ENCODE measurements at regions of chr17 and their contacts with region 1.

Region 1: GRCh38 chr17:56779898-56780733 is 53.6 kb downstream of the C17orf67 start:
- DNase-seq: peak; percentile 93
- ATAC-seq: peak; percentile 95
- H3K4me3 Mint-ChIP-seq: peak overlapping the region; percentile 77
- H3K27ac Mint-ChIP-seq: peak overlapping the region; percentile 91
- H3K4me1 Mint-ChIP-seq: peaks cover 24% of the 10 kb centered on the region
- H3K27me3 Mint-ChIP-seq: peaks cover 1% of the 10 kb centered on the region

Region 2: DNA sequence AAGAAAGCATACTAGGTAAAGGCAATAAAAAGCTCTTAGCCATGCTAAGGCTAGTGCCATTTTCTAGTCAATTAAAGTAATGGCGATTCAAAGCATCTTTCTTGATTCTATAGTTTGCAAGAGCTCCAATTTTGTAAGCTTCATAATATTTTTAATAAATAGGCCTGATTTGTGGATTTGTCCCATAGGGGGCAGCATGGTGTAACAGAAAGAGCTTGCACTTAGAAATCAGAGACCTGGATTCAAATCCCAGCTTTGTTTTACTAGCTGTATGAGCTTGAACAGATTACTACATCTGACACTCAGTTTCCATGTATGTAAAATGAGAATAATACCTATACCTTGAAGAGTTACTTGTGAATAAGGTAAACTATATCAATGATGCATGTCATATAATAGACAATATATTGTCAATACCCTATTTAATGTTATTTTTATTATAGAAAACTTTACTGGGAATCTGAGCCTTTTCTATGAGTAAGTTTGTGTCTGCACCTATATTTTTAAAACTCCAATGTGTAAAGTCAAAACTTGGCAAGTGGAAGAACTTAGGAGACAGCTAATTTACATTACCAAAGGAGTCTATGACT is 280.2 kb before region 1 on chr17:
- CTCF ChIA-PET with region 1: interaction called, 8 read pairs
- POLR2A ChIA-PET with region 1: no interaction called
- intact Hi-C with region 1: loop called (anchors 2 to 10 kb)
- DNase-seq: peak; percentile 45
- ATAC-seq: no peak
- H3K4me3 Mint-ChIP-seq: no peak overlapping the region
- H3K27ac Mint-ChIP-seq: no peak overlapping the region
- H3K4me1 Mint-ChIP-seq: no peaks in the 10 kb centered on the region
- H3K27me3 Mint-ChIP-seq: no peaks in the 10 kb centered on the region

Region 3: DNA sequence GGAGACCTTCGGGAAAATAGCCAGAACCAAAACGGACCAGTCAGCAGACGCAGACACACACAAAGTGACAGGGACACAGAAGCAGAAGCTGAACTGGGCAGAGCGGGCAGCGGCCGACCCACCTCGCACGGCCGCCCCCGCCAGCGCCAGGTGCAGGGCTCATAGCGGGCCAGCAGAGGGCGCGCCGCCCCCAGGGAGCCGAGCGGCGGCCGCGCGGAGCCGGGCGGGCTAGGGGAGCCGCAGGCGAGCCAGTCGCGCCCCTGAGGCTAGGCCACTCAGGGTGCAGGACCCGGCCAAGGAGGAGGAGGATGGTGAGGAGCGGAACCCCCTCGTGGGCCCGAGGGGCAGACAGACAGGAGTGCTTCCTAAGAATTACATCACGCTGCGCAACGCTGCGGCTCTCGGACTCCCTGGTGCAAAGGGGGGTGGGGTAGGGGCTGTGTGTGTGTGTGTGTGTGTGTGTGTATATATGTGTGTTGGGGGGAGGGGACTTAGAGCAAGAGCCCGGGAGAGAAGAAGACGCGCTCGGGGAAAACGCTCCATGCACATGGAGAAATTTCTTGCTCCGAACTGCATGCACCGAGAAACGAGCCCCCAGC is 187.5 kb before region 1 on chr17:
- CTCF ChIA-PET with region 1: interaction called, 20 read pairs
- POLR2A ChIA-PET with region 1: interaction called, 3 read pairs
- intact Hi-C with region 1: loop called (anchors 1 kb)
- DNase-seq: peak; percentile 82
- ATAC-seq: peak; percentile 60
- H3K4me3 Mint-ChIP-seq: peak overlapping the region; percentile 64
- H3K27ac Mint-ChIP-seq: no peak overlapping the region
- H3K4me1 Mint-ChIP-seq: peaks cover 20% of the 10 kb centered on the region
- H3K27me3 Mint-ChIP-seq: peaks cover 23% of the 10 kb centered on the region

Region 4: DNA sequence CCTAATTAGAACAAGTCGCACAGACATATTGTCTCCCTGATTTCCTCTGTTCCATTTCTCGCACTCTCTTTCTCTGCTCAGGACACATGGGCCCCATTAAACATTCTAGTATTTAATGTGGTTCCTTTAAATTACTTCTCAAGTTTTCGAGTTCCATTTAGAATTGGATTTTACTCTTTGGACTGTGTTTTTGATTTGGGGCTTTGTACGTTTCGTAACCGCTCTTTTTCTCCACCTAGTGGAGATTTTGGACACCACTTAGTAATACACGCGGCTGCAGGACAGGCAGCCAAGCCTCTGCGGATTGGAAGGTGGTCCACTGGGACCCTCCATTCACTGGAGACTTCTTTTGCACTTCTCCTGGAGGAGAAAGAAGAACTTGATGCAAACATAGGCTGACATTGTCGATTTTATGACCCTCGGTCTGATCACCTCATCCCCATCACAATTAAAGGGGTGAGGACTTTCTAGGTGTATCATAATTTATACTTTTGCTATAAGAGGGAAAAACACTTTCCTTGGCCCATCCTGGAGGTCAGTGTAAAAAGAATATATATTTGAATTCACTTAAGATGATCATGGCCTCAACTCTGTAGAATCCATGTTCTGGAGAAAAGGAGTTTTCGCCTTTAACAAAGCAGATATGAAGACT is 100.9 kb before region 1 on chr17:
- CTCF ChIA-PET with region 1: interaction called, 10 read pairs
- POLR2A ChIA-PET with region 1: no interaction called
- intact Hi-C with region 1: loop called (anchors 1 kb)
- DNase-seq: peak; percentile 19
- ATAC-seq: peak; percentile 34
- H3K4me3 Mint-ChIP-seq: peak overlapping the region; percentile 63
- H3K27ac Mint-ChIP-seq: no peak overlapping the region
- H3K4me1 Mint-ChIP-seq: peaks cover 24% of the 10 kb centered on the region
- H3K27me3 Mint-ChIP-seq: peaks cover 42% of the 10 kb centered on the region

Region 5: DNA sequence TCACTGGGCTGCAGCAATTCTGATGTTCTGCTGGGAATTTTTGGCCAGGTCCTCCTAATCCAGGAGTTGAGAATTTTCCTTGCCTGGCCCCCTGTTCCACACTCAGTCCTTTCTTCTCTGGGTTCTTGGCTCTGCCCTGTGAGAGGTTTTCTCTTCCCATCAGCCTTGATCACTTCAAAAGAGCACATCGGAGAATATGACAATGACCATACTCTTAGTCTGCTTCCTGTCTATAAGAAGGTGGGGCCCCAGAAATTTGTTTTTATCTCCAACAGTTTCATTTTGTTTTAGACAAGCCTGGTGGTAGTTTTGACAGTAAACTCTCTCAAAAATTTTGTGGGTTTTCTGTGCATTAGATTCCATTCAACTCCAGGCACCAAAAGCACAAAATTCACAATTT is 17.1 kb before region 1 on chr17:
- CTCF ChIA-PET with region 1: interaction called, 10 read pairs
- POLR2A ChIA-PET with region 1: no interaction called
- intact Hi-C with region 1: no loop called
- DNase-seq: no peak
- ATAC-seq: peak; percentile 97
- H3K4me3 Mint-ChIP-seq: peak overlapping the region; percentile 20
- H3K27ac Mint-ChIP-seq: peak overlapping the region; percentile 82
- H3K4me1 Mint-ChIP-seq: peaks cover 22% of the 10 kb centered on the region
- H3K27me3 Mint-ChIP-seq: no peaks in the 10 kb centered on the region

Region 6: DNA sequence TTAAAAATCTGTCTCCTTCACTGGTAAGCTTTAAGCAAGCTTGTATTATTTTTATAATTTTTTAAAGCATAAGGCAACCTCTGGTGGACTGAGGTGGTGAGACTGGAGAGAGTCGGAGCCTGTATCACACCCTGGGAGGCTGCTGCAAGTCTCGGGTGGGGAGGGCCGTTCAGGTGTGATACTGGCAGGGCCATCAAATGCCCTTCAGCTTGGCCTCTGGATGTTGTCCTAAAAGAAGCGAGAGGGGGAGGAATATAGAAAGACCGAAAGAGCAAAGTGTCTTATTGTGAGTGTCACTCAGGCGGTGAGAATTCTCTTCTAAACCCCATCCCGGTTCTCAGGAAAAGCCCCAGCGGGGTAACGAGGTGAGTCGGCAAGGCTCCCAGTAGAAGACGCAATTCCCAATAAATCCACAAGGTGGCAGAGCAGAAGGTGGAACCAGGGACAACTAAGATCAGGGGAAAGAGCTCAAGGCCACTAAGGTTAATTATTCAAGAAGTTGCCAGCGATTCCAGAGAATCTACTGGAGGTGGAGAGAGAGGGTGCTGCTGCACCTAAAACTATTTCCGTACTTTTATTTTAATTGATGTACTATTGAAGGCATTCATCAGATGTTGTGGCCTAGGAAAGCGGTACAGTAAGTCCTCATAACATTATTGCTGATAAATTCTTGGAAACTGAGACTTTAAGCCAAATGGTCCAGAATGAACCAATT is 39.5 kb after region 1 on chr17:
- CTCF ChIA-PET with region 1: interaction called, 16 read pairs
- POLR2A ChIA-PET with region 1: no interaction called
- intact Hi-C with region 1: no loop called
- DNase-seq: peak; percentile 84
- ATAC-seq: peak; percentile 83
- H3K4me3 Mint-ChIP-seq: no peak overlapping the region
- H3K27ac Mint-ChIP-seq: peak overlapping the region; percentile 7
- H3K4me1 Mint-ChIP-seq: peaks cover 22% of the 10 kb centered on the region
- H3K27me3 Mint-ChIP-seq: no peaks in the 10 kb centered on the region

Region 7: DNA sequence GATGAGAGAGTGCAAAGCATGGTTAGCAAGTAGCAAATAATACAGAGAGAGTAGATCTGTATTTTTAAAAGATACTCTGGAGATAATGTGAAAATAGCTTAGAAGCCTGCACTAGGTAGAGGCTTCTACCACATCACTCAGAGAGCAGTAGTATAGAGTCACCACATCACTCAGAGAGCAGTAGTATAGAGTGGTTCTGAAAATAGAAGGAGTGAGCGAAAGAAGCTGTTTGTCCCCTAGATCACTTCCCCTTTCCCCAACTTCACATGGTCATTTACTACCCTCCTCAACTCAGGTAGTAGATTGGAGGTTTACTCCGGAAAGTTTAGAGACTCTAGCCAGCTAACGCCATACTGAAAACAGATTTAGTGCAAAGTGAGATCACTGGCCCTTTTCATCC is 70.9 kb after region 1 on chr17:
- CTCF ChIA-PET with region 1: no interaction called
- POLR2A ChIA-PET with region 1: no interaction called
- intact Hi-C with region 1: no loop called
- DNase-seq: no peak
- ATAC-seq: no peak
- H3K4me3 Mint-ChIP-seq: no peak overlapping the region
- H3K27ac Mint-ChIP-seq: no peak overlapping the region
- H3K4me1 Mint-ChIP-seq: no peaks in the 10 kb centered on the region
- H3K27me3 Mint-ChIP-seq: no peaks in the 10 kb centered on the region

Region 8: GRCh38 chr17:56866496-56866895 is 86.4 kb after region 1 on chr17:
- CTCF ChIA-PET with region 1: no interaction called
- POLR2A ChIA-PET with region 1: no interaction called
- intact Hi-C with region 1: no loop called
- DNase-seq: no peak
- ATAC-seq: no peak
- H3K4me3 Mint-ChIP-seq: no peak overlapping the region
- H3K27ac Mint-ChIP-seq: no peak overlapping the region
- H3K4me1 Mint-ChIP-seq: peaks cover 16% of the 10 kb centered on the region
- H3K27me3 Mint-ChIP-seq: no peaks in the 10 kb centered on the region